Psoas muscle (tissue), 8 donors: ENCODE measurements at regions of chr1 and their contacts with region 1.

Region 1: DNA sequence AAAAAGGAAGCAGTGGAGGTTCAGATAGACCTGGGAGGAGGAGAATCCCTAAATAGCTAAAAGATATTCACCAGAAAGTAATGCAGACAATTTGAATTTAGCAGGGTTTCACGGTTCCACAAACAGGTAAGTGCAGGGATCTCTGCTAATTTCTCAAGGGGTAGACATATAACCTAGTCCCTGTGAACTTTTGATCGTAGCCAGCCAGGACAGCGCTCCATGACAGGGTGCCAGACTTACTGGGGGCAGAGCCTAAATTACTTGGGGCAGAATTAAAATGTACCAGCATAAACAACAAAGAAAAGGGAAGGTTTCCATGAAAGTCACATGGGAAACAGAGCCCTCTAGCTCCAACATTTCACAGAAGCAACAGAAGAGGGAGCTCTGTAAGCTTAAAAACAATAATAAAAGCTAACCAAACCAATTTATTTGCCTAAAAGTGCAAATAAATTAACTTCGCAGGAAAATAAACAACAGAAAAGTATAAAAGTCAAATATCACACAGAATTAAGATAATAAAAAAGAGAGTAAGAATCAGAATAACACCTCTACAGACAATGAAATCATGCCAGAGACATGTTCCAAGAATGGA is 198.3 kb downstream of the DUSP10 start:
- DNase-seq: no peak
- ATAC-seq: peak in 3 of 4 donors; percentile 32 to 56 (median 55)
- H3K4me3 ChIP-seq: no peak overlapping the region
- H3K27ac ChIP-seq: no peak overlapping the region
- H3K4me1 ChIP-seq: no peaks in the 10 kb centered on the region
- H3K27me3 ChIP-seq: no peaks in the 10 kb centered on the region
- CTCF ChIP-seq: peak; percentile 60

Region 2: GRCh38 chr1:221141606-221142285 is 401.9 kb before region 1 on chr1:
- intact Hi-C with region 1: no loop called
- DNase-seq: no peak
- ATAC-seq: no peak
- H3K4me3 ChIP-seq: no peak overlapping the region
- H3K27ac ChIP-seq: no peak overlapping the region
- H3K4me1 ChIP-seq: no peaks in the 10 kb centered on the region
- H3K27me3 ChIP-seq: no peaks in the 10 kb centered on the region
- CTCF ChIP-seq: no peak

Region 3: DNA sequence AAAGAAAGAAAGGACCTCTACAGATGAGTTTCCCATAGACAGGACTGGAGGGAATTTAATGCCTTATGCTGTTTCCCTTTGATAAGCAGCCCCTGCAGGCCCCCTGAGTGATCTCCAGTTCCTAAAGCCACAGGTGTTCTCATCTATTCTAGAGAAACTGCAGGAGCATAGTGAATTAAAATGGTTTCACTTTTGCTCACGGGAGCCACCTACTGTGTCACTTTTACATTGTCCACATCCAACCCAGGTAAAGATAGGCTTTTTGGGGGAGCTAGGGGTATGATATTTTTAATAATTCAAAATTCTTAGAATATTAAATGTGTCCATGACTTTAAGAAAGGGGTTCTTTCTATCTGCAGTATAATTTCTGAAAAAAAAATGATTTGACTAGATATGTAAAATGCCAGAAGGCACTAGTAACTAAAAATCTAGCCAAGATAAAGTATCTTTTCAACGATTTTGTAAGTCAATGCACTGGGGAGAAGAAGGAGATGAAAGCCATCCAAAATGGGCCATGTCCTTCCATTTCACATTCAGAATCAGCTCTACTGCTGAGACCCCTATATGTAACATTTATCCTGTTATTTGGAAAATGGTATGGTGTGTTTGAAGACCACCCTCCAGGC is 465.6 kb after region 1 on chr1:
- intact Hi-C with region 1: loop called (anchors 10 kb)
- DNase-seq: no peak
- ATAC-seq: peak; percentile 48 to 73 (median 55)
- H3K4me3 ChIP-seq: no peak overlapping the region
- H3K27ac ChIP-seq: no peak overlapping the region
- H3K4me1 ChIP-seq: no peaks in the 10 kb centered on the region
- H3K27me3 ChIP-seq: no peaks in the 10 kb centered on the region
- CTCF ChIP-seq: peak; percentile 44

Region 4: DNA sequence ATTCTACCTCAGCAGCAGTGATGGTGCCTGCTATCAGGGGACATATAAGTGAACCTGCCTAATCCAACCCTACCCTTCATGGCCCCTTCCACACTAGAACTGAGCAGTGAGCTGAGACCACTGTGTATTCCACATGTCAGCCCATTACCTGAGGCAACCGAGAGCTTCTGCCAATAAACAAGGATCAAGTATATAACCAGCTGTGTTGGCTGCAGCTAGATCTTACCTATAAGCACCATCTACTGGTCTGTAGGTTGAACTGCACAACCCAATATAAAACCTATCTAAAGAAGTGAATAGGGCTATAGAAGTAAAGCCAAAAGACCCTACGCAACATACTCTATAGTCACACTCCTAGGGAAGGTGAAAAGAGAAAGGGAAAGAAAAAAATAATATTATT is 627.4 kb after region 1 on chr1:
- intact Hi-C with region 1: loop called (anchors 5 to 10 kb)
- DNase-seq: no peak
- ATAC-seq: peak; percentile 78 to 87 (median 82)
- H3K4me3 ChIP-seq: no peak overlapping the region
- H3K27ac ChIP-seq: no peak overlapping the region
- H3K4me1 ChIP-seq: no peaks in the 10 kb centered on the region
- H3K27me3 ChIP-seq: no peaks in the 10 kb centered on the region
- CTCF ChIP-seq: peak; percentile 65